Dorsolateral prefrontal cortex (tissue), 120 donors: ENCODE measurements at regions of chr1 and their contacts with region 1.

Region 1: DNA sequence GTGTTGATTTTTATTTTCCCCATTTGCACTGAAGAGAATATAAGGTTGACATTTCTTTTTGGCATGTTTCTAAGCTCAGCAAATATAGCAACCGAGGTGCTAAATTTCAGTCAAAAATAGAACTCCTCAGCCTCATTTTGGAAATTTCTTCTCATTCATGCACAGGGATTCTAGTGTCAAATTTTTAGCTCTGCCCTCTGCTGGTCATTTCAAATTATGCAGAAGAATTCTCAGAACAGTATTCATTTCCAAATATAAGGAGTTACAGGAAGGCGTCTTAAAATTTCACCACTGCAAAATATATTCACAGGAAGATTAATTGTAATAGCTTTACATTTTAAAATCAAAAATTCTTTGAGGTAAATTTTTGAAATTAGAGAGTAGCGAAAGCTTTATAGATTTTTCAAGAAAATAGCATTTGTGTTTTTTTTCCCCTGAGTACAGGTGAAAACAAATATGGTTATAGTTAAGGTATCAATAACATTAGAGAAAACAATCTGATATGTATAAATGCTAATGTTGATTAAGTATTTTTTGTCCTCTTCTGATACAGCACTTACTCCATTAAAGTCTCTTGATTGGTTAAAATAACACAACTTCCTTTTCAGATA is 57.9 kb downstream of the FMN2 start:
- DNase-seq: peak in 1 of 10 donors; percentile 12
- H3K4me3 ChIP-seq: no peak overlapping the region
- H3K27ac ChIP-seq: peak overlapping the region in 2 of 59 donors; percentile 5 to 6
- H3K27me3 ChIP-seq: no peaks in the 10 kb centered on the region
- CTCF ChIP-seq: peak; percentile 63 to 96 (median 78)

Region 2: GRCh38 chr1:240027059-240027462 is 122.5 kb before region 1 on chr1:
- intact Hi-C with region 1: loop called (anchors 5 to 10 kb)
- DNase-seq: peak in 9 of 10 donors; percentile 30 to 73 (median 53)
- H3K4me3 ChIP-seq: peak overlapping the region in 1 of 59 donors; percentile 1
- H3K27ac ChIP-seq: no peak overlapping the region
- H3K27me3 ChIP-seq: no peaks in the 10 kb centered on the region
- CTCF ChIP-seq: peak; percentile 64 to 99 (median 90)

Region 3: DNA sequence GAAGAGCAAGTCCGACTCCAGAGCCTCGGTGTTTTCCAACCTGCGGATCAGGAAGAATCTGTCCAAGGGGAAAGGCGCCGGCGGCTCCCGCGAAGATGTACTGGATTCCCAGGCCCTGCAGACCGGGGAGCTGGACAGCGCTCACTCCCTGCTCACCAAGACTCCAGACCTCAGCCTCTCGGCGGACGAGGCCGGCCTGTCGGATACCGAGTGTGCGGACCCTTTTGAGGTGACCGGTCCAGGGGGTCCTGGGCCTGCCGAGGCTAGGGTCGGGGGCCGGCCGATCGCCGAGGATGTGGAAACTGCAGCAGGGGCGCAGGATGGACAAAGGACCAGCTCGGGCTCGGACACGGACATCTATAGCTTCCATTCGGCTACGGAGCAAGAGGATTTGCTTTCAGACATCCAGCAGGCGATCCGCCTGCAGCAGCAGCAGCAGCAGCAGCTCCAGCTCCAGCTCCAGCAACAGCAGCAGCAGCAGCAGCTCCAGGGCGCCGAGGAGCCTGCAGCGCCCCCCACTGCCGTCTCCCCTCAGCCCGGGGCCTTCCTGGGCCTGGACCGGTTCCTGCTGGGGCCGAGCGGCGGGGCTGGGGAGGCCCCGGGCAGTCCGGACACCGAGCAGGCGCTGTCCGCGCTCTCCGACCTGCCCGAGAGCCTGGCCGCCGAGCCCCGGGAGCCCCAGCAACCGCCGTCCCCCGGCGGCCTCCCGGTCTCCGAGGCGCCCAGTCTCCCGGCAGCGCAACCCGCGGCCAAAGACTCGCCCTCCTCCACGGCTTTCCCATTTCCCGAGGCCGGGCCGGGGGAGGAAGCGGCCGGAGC is 57.1 kb before region 1 on chr1:
- intact Hi-C with region 1: loop called (anchors 5 kb)
- DNase-seq: peak in 8 of 10 donors; percentile 14 to 73 (median 42)
- H3K4me3 ChIP-seq: peak overlapping the region; percentile 37 to 88 (median 76)
- H3K27ac ChIP-seq: peak overlapping the region in 58 of 59 donors; percentile 2 to 95 (median 87)
- H3K27me3 ChIP-seq: peaks cover 0 to 13% (median 0%) of the 10 kb centered on the region in 45 donors
- CTCF ChIP-seq: peak in 41 of 56 donors; percentile 12 to 51 (median 28)